Breast epithelium (tissue), 4 donors: ENCODE measurements at regions of chr6 and their contacts with region 1.

Region 1: GRCh38 chr6:125584468-125585029 is 164.9 kb upstream of the HEY2 start:
- DNase-seq: no peak
- H3K4me3 ChIP-seq: no peak overlapping the region
- H3K27ac ChIP-seq: no peak overlapping the region
- H3K4me1 ChIP-seq: no peaks in the 10 kb centered on the region
- H3K27me3 ChIP-seq: no peaks in the 10 kb centered on the region
- CTCF ChIP-seq: no peak
- POLR2A ChIP-seq: no peak

Region 2: DNA sequence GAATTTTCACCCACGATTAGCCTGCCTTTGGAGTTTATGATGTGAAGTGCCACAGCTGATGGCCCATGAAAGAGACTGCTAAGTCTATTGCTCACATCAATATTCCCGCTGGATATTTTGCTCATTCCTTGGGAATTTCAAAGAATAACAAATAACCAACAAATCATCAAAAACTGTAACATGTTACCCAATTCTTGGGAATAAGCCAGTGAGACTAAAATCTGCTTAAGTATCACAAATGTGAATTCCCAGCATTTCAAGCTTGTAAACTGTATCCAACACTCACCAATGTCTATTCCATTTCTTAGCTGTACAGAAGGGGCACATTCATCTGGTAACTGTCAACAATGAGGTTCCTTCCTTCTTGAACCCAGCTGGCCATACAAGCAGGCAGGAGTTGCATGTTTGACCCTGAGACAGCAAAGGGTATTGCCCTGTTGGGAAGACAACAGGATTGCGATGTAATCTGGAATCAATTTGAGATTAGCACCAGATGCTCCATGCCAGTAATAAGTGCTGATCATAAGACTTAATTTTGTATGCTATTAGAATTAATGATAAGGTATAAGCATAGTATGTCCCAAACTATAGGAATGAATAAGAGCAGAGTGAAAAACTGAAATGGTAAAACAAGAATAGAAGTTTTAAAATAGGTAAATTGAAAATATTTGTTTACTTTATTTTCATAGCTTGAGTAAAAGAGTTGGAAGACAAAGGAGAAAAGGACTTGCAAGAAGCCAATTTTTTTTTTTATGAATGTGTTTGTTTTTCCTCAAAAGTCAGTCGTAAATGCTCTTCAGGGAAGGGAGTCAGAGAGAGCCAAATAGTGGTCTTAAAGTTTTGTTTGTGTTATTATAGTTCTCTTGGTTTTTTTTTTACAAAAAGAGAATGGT is 1592.7 kb after region 1 on chr6:
- intact Hi-C with region 1: loop called (anchors 10 kb)
- DNase-seq: no peak
- H3K4me3 ChIP-seq: no peak overlapping the region
- H3K27ac ChIP-seq: peak overlapping the region in 1 of 2 donors; percentile 55
- H3K4me1 ChIP-seq: no peaks in the 10 kb centered on the region
- H3K27me3 ChIP-seq: no peaks in the 10 kb centered on the region
- CTCF ChIP-seq: no peak
- POLR2A ChIP-seq: no peak